Right ventricle myocardium superior (tissue), 1 donor: ENCODE measurements at regions of chr7 and their contacts with region 1.

Region 1: GRCh38 chr7:1086588-1087464 is 1.1 kb upstream of the GPER1 start:
- DNase-seq: peak; percentile 80
- ATAC-seq: peak; percentile 83

Region 2: DNA sequence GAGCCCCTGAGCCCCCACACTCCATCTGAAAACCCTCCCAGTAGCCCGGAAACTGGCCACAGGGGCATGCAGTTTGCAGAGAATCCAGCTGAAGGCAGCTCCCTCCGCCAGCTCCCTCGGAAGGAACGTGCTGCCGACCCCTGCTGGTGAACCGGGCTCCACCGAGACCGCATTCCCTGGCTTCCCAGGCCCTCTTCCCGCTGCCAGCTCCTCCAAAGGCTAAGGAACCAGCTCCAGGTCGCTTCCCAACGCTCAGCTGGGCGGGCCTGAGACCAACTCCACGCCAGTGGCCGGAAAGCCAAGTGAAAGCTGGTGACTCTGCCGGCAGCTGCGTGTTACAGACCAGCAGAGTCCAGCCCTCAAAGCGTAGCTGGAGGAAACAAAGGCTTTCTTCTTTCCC is 36.9 kb after region 1 on chr7:
- intact Hi-C with region 1: loop called (anchors 5 kb)
- DNase-seq: peak; percentile 92
- ATAC-seq: peak; percentile 91